CD8-positive, alpha-beta T cell (primary cell): ENCODE measurements at regions of chr17 and their contacts with region 1.

Region 1: GRCh38 chr17:45148183-45149036 is at the start of gene HEXIM1:
- DNase-seq: peak; percentile 98 to 100 (median 99)
- ATAC-seq: peak; percentile 80
- H3K4me3 ChIP-seq: peak within 1 kb of the TSS; percentile 68 to 80
- H3K4me3 Mint-ChIP-seq: peak within 1 kb of the TSS; percentile 98
- H3K27ac ChIP-seq: peak within 1 kb of the TSS; percentile 84 to 94
- H3K27ac Mint-ChIP-seq: peak within 1 kb of the TSS; percentile 100
- H3K4me1 ChIP-seq: peaks cover 41% of the 10 kb centered on the region
- H3K4me1 Mint-ChIP-seq: peaks cover 54% of the 10 kb centered on the region
- H3K27me3 ChIP-seq: no peaks in the 10 kb centered on the region
- H3K27me3 Mint-ChIP-seq: no peaks in the 10 kb centered on the region
- CTCF ChIP-seq: no peak
- total RNA-seq, gene HEXIM1: 76.5 to 77.2 TPM

Region 2: DNA sequence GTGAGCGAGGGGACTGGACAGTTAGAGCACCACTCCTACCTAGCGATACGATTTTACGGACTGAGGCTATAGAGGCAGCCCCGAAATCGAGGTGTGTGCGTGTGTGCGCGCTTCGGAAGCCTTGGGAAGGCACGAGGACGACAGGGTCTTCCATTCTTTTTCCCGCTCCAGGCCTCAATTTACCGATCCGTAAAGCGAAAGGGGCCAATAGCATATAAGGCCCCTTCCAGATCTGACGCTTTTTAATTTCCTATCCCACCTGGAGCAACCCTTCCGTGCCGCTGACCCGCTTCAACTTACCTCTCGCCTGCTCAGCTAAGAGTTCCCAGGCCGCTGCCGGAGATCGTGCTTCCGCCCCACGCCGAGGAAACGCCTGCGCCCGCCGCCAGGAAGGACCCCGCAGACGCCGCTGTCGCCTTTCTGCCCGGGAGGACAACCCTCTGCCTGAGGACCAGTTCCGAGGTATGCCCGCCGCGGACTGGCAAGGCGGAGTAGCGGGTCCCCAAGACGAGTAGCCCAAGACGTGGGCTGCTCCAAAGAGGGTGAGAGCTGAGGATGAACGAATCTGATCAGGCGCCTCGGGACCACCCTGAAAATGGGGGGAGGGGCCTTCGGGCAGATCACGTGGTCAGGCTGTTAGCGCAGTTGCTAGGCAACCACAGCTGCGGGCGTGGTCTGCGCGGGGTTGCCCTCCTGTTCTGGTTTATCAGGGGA is 249.2 kb before region 1 on chr17 and contains the start of gene EFTUD2:
- CTCF ChIA-PET with region 1: no interaction called
- POLR2A ChIA-PET with region 1: interaction called, 7 read pairs
- intact Hi-C with region 1: loop called in 1 of 2 experiments (anchors 2 kb)
- DNase-seq: peak; percentile 88 to 98 (median 93)
- ATAC-seq: peak; percentile 95
- H3K4me3 ChIP-seq: peak within 1 kb of the TSS; percentile 71 to 84
- H3K4me3 Mint-ChIP-seq: peak within 1 kb of the TSS; percentile 97
- H3K27ac ChIP-seq: peak within 1 kb of the TSS; percentile 96 to 98
- H3K27ac Mint-ChIP-seq: peak within 1 kb of the TSS; percentile 100
- H3K4me1 ChIP-seq: peaks cover 18% of the 10 kb centered on the region
- H3K4me1 Mint-ChIP-seq: peaks cover 29% of the 10 kb centered on the region
- H3K27me3 ChIP-seq: no peaks in the 10 kb centered on the region
- H3K27me3 Mint-ChIP-seq: no peaks in the 10 kb centered on the region
- CTCF ChIP-seq: no peak
- total RNA-seq, gene EFTUD2: 131 to 133 TPM

Region 3: DNA sequence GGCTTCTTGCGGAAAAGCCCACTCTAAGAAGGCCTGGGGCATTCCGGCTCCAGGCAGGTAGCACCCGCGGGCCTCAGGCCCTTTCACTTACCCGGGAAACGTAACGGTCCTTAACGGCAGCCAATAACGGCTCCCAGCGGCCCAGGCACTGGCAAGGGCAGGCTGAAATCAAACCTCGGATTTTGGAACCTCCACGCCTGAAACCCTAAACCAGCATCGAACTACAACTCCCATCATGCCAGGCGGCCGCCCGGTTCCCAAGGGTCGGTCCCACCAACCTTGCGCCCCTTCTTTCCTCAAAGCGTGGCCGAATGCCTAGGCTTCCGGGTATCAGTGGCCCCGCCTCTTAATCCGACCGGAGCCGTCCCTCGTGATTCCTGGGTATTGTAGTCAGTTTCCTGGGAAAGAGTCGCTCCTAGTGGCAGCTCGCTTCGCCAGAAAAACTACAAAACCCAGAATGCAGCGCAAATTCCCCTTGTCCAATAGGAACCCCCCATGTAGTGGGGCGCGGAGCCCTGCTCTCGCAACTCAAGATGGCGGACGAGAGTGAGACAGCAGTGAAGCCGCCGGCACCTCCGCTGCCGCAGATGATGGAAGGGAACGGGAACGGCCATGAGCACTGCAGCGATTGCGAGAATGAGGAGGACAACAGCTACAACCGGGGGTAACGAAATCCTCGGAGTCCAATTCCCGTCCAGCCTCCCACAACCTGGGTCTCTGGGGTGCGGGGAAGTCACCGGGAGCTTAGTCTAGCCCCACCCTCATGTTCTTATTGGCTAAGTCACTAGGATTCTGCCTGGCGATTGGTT is 87.4 kb before region 1 on chr17 and contains the start of gene NMT1:
- CTCF ChIA-PET with region 1: no interaction called
- POLR2A ChIA-PET with region 1: interaction called, 9 read pairs
- intact Hi-C with region 1: loop called in 1 of 2 experiments (anchors 1 kb)
- DNase-seq: peak; percentile 88 to 99 (median 94)
- ATAC-seq: peak; percentile 90
- H3K4me3 ChIP-seq: peak within 1 kb of the TSS; percentile 84 to 88
- H3K4me3 Mint-ChIP-seq: peak within 1 kb of the TSS; percentile 97
- H3K27ac ChIP-seq: peak within 1 kb of the TSS; percentile 81 to 91
- H3K27ac Mint-ChIP-seq: peak within 1 kb of the TSS; percentile 99
- H3K4me1 ChIP-seq: peaks cover 32% of the 10 kb centered on the region
- H3K4me1 Mint-ChIP-seq: peaks cover 43% of the 10 kb centered on the region
- H3K27me3 ChIP-seq: no peaks in the 10 kb centered on the region
- H3K27me3 Mint-ChIP-seq: no peaks in the 10 kb centered on the region
- CTCF ChIP-seq: no peak
- total RNA-seq, gene NMT1: 62.6 to 66.6 TPM

Region 4: GRCh38 chr17:45172454-45173286 is 24.3 kb after region 1 on chr17:
- CTCF ChIA-PET with region 1: interaction called, 60 read pairs
- POLR2A ChIA-PET with region 1: interaction called, 73 read pairs
- intact Hi-C with region 1: no loop called
- DNase-seq: peak in 8 of 9 experiments; percentile 39 to 76 (median 52)
- ATAC-seq: peak; percentile 81
- H3K4me3 ChIP-seq: peak overlapping the region; percentile 35 to 65
- H3K4me3 Mint-ChIP-seq: peak overlapping the region; percentile 80
- H3K27ac ChIP-seq: peak overlapping the region; percentile 31 to 66
- H3K27ac Mint-ChIP-seq: peak overlapping the region; percentile 91
- H3K4me1 ChIP-seq: peaks cover 26% of the 10 kb centered on the region
- H3K4me1 Mint-ChIP-seq: peaks cover 23% of the 10 kb centered on the region
- H3K27me3 ChIP-seq: no peaks in the 10 kb centered on the region
- H3K27me3 Mint-ChIP-seq: no peaks in the 10 kb centered on the region
- CTCF ChIP-seq: no peak

Region 5: DNA sequence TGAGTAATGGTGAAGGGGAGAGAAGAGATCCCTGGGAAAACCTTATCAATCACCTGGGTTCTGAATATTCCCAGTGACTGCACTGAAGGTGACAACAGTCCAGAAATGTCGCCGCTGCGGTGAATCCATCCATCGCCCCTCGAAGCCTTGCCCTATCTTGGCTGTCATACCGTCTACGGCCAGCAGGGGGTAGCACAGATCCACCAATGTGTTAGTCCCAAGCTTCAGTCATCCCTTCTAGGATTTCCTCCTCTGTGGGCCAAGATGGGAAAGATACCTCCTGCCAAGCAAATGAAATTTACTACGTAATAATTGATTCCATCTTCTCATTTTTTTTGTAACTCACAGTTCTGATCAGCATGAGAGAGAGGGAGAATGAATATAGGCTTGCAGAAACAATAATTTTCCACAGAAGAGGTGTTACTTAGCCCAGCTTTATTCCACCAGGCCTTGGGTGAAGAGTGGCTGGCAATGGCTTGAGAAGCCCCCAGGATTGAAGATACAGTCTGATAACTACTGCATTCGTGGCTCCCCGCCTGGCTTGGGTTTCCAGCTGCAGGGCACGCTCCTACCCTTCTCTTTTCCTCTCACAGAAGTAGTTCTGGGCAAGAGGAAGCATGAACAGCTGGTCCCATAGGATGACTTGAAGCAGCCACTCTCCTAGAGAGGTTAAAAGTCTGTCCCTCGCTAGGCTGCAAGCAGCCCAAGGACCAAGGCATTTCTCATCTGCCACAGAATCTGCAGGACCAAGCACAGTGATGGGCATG is 70.7 kb after region 1 on chr17:
- CTCF ChIA-PET with region 1: interaction called, 26 read pairs
- POLR2A ChIA-PET with region 1: interaction called, 63 read pairs
- intact Hi-C with region 1: no loop called
- DNase-seq: peak; percentile 79 to 95 (median 89)
- ATAC-seq: peak; percentile 45
- H3K4me3 ChIP-seq: peak overlapping the region in 1 of 2 experiments; percentile 1
- H3K4me3 Mint-ChIP-seq: peak overlapping the region; percentile 91
- H3K27ac ChIP-seq: no peak overlapping the region
- H3K27ac Mint-ChIP-seq: peak overlapping the region; percentile 90
- H3K4me1 ChIP-seq: peaks cover 25% of the 10 kb centered on the region
- H3K4me1 Mint-ChIP-seq: peaks cover 37% of the 10 kb centered on the region
- H3K27me3 ChIP-seq: no peaks in the 10 kb centered on the region
- H3K27me3 Mint-ChIP-seq: no peaks in the 10 kb centered on the region
- CTCF ChIP-seq: peak; percentile 96

Region 6: DNA sequence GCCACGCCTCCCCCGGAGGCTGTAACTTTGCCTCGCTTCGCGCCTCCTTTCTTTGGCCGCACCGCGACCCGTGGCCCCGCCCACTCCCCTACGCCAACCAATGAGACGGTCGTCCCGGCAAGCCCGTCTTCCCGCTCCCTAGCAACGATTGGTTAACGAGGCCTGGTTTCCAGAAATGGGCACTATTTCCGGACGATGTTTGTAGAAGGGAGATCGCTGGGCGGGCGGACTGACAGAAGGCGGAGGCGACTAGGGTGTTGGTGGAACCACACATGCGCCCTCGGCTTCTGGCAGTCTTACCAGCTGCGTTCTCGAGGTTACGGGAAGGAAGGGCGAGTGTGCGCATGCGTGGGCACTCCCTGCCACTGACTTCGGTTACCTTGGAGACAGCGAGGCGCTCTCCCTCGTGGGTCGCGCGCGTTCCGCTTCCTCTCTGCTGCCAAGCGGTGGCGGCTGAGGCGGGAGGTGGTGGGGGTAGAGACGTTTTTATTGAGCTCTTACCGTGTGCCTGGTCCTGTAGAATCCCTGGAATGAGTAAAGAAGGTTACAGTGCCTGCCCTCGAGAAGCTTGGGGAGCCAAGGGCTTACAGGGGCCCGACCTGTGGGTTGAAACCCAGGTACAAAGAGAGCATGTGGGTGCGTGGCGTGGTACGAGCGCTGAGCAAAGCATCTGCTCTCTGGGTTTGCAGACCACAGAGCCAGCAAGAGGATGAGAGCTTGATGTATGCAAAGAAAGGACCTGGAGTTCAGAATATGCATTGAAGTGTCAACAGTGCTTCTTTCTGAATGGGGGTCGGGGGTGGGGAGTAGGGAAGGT is 168.9 kb after region 1 on chr17:
- CTCF ChIA-PET with region 1: interaction called, 8 read pairs
- POLR2A ChIA-PET with region 1: interaction called, 6 read pairs
- intact Hi-C with region 1: loop called (anchors 1 to 2 kb)
- DNase-seq: peak; percentile 99 to 100 (median 100)
- ATAC-seq: peak; percentile 81
- H3K4me3 ChIP-seq: peak overlapping the region; percentile 55 to 81
- H3K4me3 Mint-ChIP-seq: peak overlapping the region; percentile 95
- H3K27ac ChIP-seq: peak overlapping the region; percentile 75 to 81
- H3K27ac Mint-ChIP-seq: peak overlapping the region; percentile 94
- H3K4me1 ChIP-seq: peaks cover 78% of the 10 kb centered on the region
- H3K4me1 Mint-ChIP-seq: peaks cover 80% of the 10 kb centered on the region
- H3K27me3 ChIP-seq: no peaks in the 10 kb centered on the region
- H3K27me3 Mint-ChIP-seq: no peaks in the 10 kb centered on the region
- CTCF ChIP-seq: no peak